CD8-positive, alpha-beta T cell (primary cell): ENCODE measurements at regions of chr11 and their contacts with region 1.

Region 1: GRCh38 chr11:112226062-112226830 is at the start of gene PTS:
- DNase-seq: peak; percentile 66 to 94 (median 82)
- ATAC-seq: peak; percentile 89
- H3K4me3 ChIP-seq: peak within 1 kb of the TSS; percentile 71 to 81
- H3K4me3 Mint-ChIP-seq: peak within 1 kb of the TSS; percentile 95
- H3K27ac ChIP-seq: peak within 1 kb of the TSS; percentile 91 to 100
- H3K27ac Mint-ChIP-seq: peak within 1 kb of the TSS; percentile 99
- H3K4me1 ChIP-seq: peaks cover 10% of the 10 kb centered on the region
- H3K4me1 Mint-ChIP-seq: peaks cover 31% of the 10 kb centered on the region
- H3K27me3 ChIP-seq: no peaks in the 10 kb centered on the region
- H3K27me3 Mint-ChIP-seq: no peaks in the 10 kb centered on the region
- CTCF ChIP-seq: no peak
- total RNA-seq, gene PTS: 83.5 to 87.9 TPM

Region 2: DNA sequence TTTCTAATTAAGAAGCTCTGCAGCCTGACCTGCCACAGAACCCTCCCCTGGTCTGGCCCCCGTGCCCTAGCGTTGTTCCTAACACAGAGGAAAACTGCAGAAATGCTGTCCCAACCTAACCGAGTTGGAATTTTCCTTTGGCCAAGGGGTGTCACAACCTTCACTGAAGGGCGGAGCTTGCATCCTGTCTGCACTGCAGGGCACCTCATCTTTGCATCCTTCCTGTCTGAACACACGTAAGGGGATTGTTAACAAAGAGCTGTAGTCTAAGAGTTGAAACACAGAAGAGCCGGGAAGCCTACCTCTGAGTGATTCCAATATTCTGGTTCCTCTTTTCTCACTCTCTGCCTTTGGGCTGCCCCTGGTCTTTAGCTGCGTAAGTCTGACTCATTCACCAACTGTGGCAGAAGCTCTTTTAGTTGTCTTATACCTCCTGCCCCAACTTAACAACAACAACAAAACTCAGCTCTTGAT is 287.5 kb before region 1 on chr11:
- CTCF ChIA-PET with region 1: no interaction called
- POLR2A ChIA-PET with region 1: no interaction called
- intact Hi-C with region 1: loop called in 1 of 2 experiments (anchors 5 kb)
- DNase-seq: peak in 5 of 9 experiments; percentile 23 to 56 (median 34)
- ATAC-seq: peak; percentile 57
- H3K4me3 ChIP-seq: no peak overlapping the region
- H3K4me3 Mint-ChIP-seq: peak overlapping the region; percentile 80
- H3K27ac ChIP-seq: peak overlapping the region in 1 of 2 experiments; percentile 45
- H3K27ac Mint-ChIP-seq: peak overlapping the region; percentile 75
- H3K4me1 ChIP-seq: peaks cover 31% of the 10 kb centered on the region
- H3K4me1 Mint-ChIP-seq: peaks cover 36% of the 10 kb centered on the region
- H3K27me3 ChIP-seq: no peaks in the 10 kb centered on the region
- H3K27me3 Mint-ChIP-seq: no peaks in the 10 kb centered on the region
- CTCF ChIP-seq: no peak

Region 3: GRCh38 chr11:112280268-112281126 is 54.3 kb after region 1 on chr11:
- CTCF ChIA-PET with region 1: interaction called, 481 read pairs
- POLR2A ChIA-PET with region 1: interaction called, 11 read pairs
- intact Hi-C with region 1: loop called (anchors 1 kb)
- DNase-seq: peak; percentile 24 to 90 (median 67)
- ATAC-seq: peak; percentile 93
- H3K4me3 ChIP-seq: peak overlapping the region; percentile 60 to 79
- H3K4me3 Mint-ChIP-seq: peak overlapping the region; percentile 92
- H3K27ac ChIP-seq: peak overlapping the region in 1 of 2 experiments; percentile 28
- H3K27ac Mint-ChIP-seq: peak overlapping the region; percentile 77
- H3K4me1 ChIP-seq: no peaks in the 10 kb centered on the region
- H3K4me1 Mint-ChIP-seq: peaks cover 8% of the 10 kb centered on the region
- H3K27me3 ChIP-seq: no peaks in the 10 kb centered on the region
- H3K27me3 Mint-ChIP-seq: no peaks in the 10 kb centered on the region
- CTCF ChIP-seq: peak; percentile 44

Region 4: DNA sequence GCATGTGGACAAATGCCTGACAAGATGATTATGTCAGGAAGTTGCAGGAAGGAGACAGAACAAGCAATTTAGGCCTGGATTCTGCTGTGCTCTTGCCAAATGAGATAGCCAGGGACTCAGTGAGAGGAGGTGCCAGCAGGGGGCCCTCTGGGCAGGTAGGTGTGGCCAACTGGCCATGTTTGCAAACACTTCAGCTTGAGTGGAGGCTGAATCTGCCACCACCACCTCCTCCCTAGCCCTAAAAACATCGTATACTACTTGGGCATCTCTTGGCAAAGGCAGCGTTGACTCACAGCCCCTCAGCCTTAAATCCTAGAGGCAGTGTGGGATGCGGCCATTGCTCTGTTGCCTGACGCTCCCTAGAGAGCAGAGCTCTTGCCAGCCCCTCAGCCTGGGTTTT is 129.5 kb after region 1 on chr11:
- CTCF ChIA-PET with region 1: no interaction called
- POLR2A ChIA-PET with region 1: no interaction called
- intact Hi-C with region 1: no loop called
- DNase-seq: no peak
- ATAC-seq: no peak
- H3K4me3 ChIP-seq: no peak overlapping the region
- H3K4me3 Mint-ChIP-seq: no peak overlapping the region
- H3K27ac ChIP-seq: no peak overlapping the region
- H3K27ac Mint-ChIP-seq: no peak overlapping the region
- H3K4me1 ChIP-seq: no peaks in the 10 kb centered on the region
- H3K4me1 Mint-ChIP-seq: no peaks in the 10 kb centered on the region
- H3K27me3 ChIP-seq: no peaks in the 10 kb centered on the region
- H3K27me3 Mint-ChIP-seq: no peaks in the 10 kb centered on the region
- CTCF ChIP-seq: no peak

Region 5: DNA sequence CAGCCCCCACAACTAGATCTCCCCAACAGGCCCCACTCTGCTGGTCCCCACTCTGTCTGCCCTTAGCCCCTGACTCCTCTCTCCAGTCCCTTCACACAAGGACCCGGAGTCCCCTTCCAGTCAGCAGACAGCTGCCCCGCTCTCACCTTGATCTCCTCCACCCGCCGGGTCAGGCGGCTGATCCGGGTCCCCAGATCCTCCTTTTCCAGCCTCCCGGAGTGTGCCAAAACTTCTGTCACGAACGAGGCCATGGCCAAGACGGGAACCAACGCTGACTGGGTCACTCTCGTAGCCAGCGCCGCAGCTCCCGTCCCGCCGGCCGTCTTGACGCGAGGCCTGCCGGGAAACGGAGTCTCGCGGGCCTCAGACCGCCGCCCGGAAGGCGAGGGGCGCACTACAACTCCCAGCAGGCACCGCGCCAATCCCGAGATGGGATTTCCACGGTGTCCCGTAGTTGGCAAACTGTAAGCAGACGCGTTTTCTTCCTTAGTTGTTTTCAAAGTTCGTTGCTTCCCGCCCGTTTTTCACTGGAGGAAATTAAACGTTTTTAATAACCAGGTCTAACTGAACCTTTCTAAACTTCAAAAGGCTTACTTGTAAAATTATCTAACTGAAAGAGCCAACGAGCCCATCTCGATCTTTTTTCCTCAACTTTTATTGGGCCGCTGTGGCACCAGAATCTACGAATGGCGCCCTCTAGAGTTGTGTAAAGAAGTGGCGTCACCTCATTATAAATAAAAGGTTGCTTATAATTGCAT is 1547.3 kb after region 1 on chr11 and contains the start of gene ZW10:
- CTCF ChIA-PET with region 1: no interaction called
- POLR2A ChIA-PET with region 1: interaction called, 3 read pairs
- intact Hi-C with region 1: loop called (anchors 2 kb)
- DNase-seq: peak; percentile 79 to 96 (median 91)
- ATAC-seq: peak; percentile 98
- H3K4me3 ChIP-seq: peak within 1 kb of the TSS; percentile 89 to 90
- H3K4me3 Mint-ChIP-seq: peak within 1 kb of the TSS; percentile 99
- H3K27ac ChIP-seq: peak within 1 kb of the TSS; percentile 59 to 73
- H3K27ac Mint-ChIP-seq: peak within 1 kb of the TSS; percentile 89
- H3K4me1 ChIP-seq: peaks cover 3% of the 10 kb centered on the region
- H3K4me1 Mint-ChIP-seq: peaks cover 28% of the 10 kb centered on the region
- H3K27me3 ChIP-seq: no peaks in the 10 kb centered on the region
- H3K27me3 Mint-ChIP-seq: no peaks in the 10 kb centered on the region
- CTCF ChIP-seq: peak; percentile 96
- total RNA-seq, gene ZW10: 2.6 to 2.8 TPM